K562 (cell line): ENCODE measurements at regions of chr2 and their contacts with region 1.

Region 1: GRCh38 chr2:177392373-177393202 is at the start of gene AGPS:
- DNase-seq: peak; percentile 83 to 94 (median 88)
- ATAC-seq: peak; percentile 94
- H3K4me3 ChIP-seq: peak within 1 kb of the TSS; percentile 90
- H3K27ac ChIP-seq: peak within 1 kb of the TSS; percentile 91
- H3K4me1 ChIP-seq: peaks cover 9 to 44% of the 10 kb centered on the region in 2 experiments
- H3K27me3 ChIP-seq: no peaks in the 10 kb centered on the region
- CTCF ChIP-seq: no peak
- EP300 ChIP-seq: no peak
- POLR2A ChIP-seq: peak; percentile 95
- RAD21 ChIP-seq: 0 out of 4 replicates have a peak, but pooled peaks of 1 of the 2 experiments have one; percentile 3
- polyA plus RNA-seq, gene AGPS: 15.5 to 15.6 TPM

Region 2: DNA sequence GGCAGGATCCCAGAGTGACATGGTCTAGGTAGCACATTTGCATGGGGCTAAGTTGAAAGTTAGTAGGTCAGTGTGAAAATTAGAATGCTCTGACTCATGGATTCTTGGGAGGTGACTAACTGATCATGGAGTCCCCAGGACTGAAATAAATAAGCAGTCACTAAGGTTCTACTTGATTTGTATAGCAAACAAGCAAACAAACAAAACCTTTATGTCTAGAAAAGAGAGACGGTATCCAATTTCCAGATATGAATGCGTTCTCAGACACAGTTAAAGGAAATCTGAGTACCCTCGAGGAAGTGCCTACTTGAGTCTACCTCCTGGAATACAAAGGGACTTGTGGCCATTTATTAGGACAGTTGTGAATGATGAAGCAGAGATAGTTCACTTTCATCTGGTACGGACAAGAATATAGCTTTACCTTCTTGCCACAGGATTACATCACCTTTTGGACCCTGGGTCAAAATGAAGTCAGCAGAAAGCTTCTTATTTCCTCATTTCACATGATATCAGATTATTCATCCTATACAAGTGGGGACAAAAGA is 54.3 kb before region 1 on chr2:
- CTCF ChIA-PET with region 1: no interaction called
- POLR2A ChIA-PET with region 1: no interaction called
- in situ Hi-C with region 1: no loop called
- intact Hi-C with region 1: no loop called
- DNase-seq: no peak
- ATAC-seq: peak; percentile 74
- H3K4me3 ChIP-seq: no peak overlapping the region
- H3K27ac ChIP-seq: peak overlapping the region; percentile 31; the same call in 1 of the 3 replicates
- H3K4me1 ChIP-seq: peaks cover 0 to 8% of the 10 kb centered on the region in 2 experiments; a peak in 1 of 5 replicates
- H3K27me3 ChIP-seq: no peaks in the 10 kb centered on the region
- CTCF ChIP-seq: no peak
- EP300 ChIP-seq: peak; percentile 69; the same call in 1 of the 2 replicates
- POLR2A ChIP-seq: no peak
- RAD21 ChIP-seq: peak in 1 of 2 experiments; percentile 23; a peak in 1 of 4 replicates

Region 3: DNA sequence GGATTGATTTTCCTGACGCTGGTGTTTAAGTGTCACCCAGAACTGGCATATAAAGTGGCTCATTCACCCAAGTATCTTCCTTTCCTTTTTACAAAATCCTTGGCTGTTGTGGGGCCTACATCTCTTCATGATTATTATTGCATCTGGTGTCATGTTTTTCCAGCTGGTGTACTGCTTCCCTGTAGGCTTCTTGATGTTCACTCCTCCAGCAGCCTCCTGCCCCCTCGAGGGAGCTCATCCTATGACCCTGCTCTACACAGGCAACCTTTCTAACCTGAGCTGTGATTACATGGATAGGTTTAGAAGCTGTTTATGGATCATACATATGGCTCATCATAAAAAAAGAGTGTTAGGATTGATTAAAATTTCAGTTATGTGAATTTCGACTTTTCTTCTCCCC is 12.4 kb before region 1 on chr2:
- CTCF ChIA-PET with region 1: no interaction called
- POLR2A ChIA-PET with region 1: interaction called, 43 read pairs
- in situ Hi-C with region 1: no loop called
- intact Hi-C with region 1: no loop called
- DNase-seq: no peak
- ATAC-seq: no peak
- H3K4me3 ChIP-seq: no peak overlapping the region
- H3K27ac ChIP-seq: no peak overlapping the region
- H3K4me1 ChIP-seq: no peaks in the 10 kb centered on the region
- H3K27me3 ChIP-seq: no peaks in the 10 kb centered on the region
- CTCF ChIP-seq: no peak
- EP300 ChIP-seq: no peak
- POLR2A ChIP-seq: no peak
- RAD21 ChIP-seq: no peak

Region 4: DNA sequence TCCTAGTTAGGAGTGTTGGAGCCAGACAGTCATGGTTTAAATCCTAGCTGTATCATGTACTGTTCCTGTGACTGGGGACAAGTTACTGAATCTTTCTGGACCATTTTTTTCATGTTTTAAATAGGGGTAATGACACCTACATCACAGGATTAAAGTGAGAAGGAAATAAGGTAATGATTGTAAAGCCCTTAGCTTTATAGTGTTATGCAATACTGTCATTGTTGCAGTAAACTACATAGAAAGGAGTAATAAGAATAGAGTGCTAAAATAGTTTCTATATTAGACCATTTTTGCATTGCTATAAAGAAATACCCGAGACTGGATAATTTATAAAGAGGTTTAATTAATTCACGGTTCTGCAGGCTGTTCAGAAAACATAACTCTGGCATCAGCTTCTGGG is 14.4 kb after region 1 on chr2:
- CTCF ChIA-PET with region 1: no interaction called
- POLR2A ChIA-PET with region 1: interaction called, 17 read pairs
- in situ Hi-C with region 1: no loop called
- intact Hi-C with region 1: no loop called
- DNase-seq: no peak
- ATAC-seq: no peak
- H3K4me3 ChIP-seq: no peak overlapping the region
- H3K27ac ChIP-seq: no peak overlapping the region
- H3K4me1 ChIP-seq: peaks cover 0 to 6% of the 10 kb centered on the region in 2 experiments; a peak in 2 of 5 replicates
- H3K27me3 ChIP-seq: no peaks in the 10 kb centered on the region
- CTCF ChIP-seq: no peak
- EP300 ChIP-seq: no peak
- POLR2A ChIP-seq: no peak
- RAD21 ChIP-seq: no peak

Region 5: DNA sequence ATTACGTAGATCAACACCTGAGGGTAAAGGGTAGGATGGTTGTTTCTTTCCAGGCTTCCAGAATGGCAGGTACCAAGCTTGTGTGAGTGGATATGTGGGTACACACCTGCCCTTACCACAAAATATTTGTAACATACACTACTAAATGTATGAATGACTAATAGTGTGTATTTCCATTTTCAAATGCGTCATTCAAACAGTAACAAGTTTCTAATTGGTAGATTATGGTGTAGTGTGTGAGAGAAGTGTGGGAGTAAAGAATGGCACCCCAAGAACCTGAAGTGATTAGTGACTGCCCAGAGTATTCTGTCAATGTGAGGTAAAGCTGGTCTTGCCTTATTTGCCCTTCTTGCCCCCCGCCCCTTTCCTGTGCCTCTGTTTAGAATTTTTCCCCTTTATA is 21.1 kb after region 1 on chr2:
- CTCF ChIA-PET with region 1: interaction called, 3 read pairs
- POLR2A ChIA-PET with region 1: interaction called, 12 read pairs
- in situ Hi-C with region 1: no loop called
- intact Hi-C with region 1: no loop called
- DNase-seq: no peak
- ATAC-seq: no peak
- H3K4me3 ChIP-seq: no peak overlapping the region
- H3K27ac ChIP-seq: no peak overlapping the region
- H3K4me1 ChIP-seq: no peaks in the 10 kb centered on the region
- H3K27me3 ChIP-seq: no peaks in the 10 kb centered on the region
- CTCF ChIP-seq: no peak
- EP300 ChIP-seq: no peak
- POLR2A ChIP-seq: no peak
- RAD21 ChIP-seq: no peak